ENCODE measurements at regions of chr17 and their contacts with region 1.

Region 1: GRCh38 chr17:48084932-48085444 is 16.3 kb downstream of the CBX1 start:
- DNase-seq: no peak
- ATAC-seq: no peak
- H3K4me3 Mint-ChIP-seq: no peak overlapping the region
- H3K27ac Mint-ChIP-seq: peak overlapping the region; percentile 53; the same call in 1 of the 2 replicates
- H3K4me1 Mint-ChIP-seq: peaks cover 9% of the 10 kb centered on the region; the same call in 1 of the 2 replicates
- H3K27me3 Mint-ChIP-seq: no peaks in the 10 kb centered on the region
- CTCF ChIP-seq: no peak

Region 2: DNA sequence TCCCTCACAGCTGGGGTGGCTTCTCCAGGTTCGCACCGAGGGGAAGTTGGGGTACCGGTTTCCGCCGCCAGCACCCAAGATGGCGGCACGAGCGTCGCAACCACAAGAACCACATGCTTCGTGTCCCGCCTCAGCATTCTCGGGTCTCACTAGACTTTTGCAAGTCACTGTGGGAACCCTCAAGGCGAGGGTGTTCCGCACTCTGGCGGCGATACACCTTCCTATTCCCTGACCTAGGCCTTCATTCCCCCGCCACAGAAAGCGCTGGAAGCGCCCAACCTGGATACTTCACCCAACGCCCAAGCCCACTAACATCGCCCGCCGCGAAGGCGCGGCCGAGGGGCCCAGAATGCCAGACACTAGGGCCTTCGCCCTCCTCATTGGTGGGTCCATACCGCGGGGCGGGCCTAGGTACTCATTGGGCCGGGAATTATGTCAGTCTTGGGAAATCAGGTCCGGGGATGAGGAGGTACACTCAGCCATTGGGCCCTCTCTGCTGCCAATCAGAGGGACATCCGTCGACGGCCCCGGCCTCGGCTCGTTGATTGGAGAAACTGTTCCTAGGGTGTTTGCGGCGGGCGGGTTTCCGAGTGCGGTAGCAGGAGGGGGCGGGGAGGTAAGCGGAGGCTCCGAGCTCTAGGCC is 37.1 kb before region 1 on chr17 and contains the start of gene NFE2L1:
- CTCF ChIA-PET with region 1: interaction called, 9 read pairs
- POLR2A ChIA-PET with region 1: interaction called, 11 read pairs
- DNase-seq: peak; percentile 99
- ATAC-seq: peak; percentile 95
- H3K4me3 Mint-ChIP-seq: peak within 1 kb of the TSS; percentile 93
- H3K27ac Mint-ChIP-seq: peak within 1 kb of the TSS; percentile 100
- H3K4me1 Mint-ChIP-seq: peaks cover 55% of the 10 kb centered on the region
- H3K27me3 Mint-ChIP-seq: no peaks in the 10 kb centered on the region
- CTCF ChIP-seq: no peak
- total RNA-seq, gene NFE2L1: 130 to 149 TPM (median 131 TPM) in 3 replicates

Region 3: GRCh38 chr17:48101012-48101720 is 16.2 kb after region 1 on chr17 and contains the start of gene CBX1:
- CTCF ChIA-PET with region 1: interaction called, 22 read pairs
- POLR2A ChIA-PET with region 1: interaction called, 7 read pairs
- DNase-seq: peak; percentile 97
- ATAC-seq: peak; percentile 90
- H3K4me3 Mint-ChIP-seq: peak within 1 kb of the TSS; percentile 87
- H3K27ac Mint-ChIP-seq: peak within 1 kb of the TSS; percentile 97
- H3K4me1 Mint-ChIP-seq: peaks cover 11% of the 10 kb centered on the region
- H3K27me3 Mint-ChIP-seq: peaks cover 5% of the 10 kb centered on the region; the same call in 1 of the 2 replicates
- CTCF ChIP-seq: no peak
- total RNA-seq, gene CBX1: 162 to 167 TPM (median 165 TPM) in 3 replicates

Region 4: DNA sequence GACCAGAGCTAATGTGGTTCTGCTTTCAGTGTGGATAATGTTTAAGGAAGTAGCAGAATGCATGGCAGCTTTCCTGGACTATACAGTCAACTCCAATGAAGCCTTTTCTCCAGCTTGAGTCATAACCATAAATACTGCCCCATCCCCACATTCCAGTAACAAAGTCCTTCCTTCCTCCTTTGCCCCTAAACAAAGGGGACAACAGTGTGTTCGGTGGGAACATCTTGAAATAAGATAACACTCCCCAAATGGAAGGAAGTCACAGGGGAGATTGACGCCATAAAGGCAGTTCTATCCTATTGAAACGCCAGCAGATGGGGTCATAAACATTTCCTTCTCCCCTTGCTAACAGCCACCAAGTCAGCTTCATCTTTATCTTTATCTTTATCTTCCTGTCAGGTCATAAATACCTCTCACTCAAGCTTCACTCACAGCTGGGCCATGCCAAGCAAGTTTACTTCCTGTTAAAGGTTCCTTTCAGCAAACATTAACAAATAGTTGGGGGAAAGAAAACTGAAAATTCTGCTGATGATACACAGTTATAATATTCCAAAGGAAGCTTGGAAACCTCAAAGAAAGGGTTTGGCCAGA is 159.2 kb after region 1 on chr17:
- CTCF ChIA-PET with region 1: no interaction called
- POLR2A ChIA-PET with region 1: no interaction called
- DNase-seq: no peak
- ATAC-seq: no peak
- H3K4me3 Mint-ChIP-seq: no peak overlapping the region
- H3K27ac Mint-ChIP-seq: no peak overlapping the region
- H3K4me1 Mint-ChIP-seq: peaks cover 31% of the 10 kb centered on the region
- H3K27me3 Mint-ChIP-seq: no peaks in the 10 kb centered on the region
- CTCF ChIP-seq: no peak